ENCODE measurements at regions of chr2 and their contacts with region 1.

Region 1: DNA sequence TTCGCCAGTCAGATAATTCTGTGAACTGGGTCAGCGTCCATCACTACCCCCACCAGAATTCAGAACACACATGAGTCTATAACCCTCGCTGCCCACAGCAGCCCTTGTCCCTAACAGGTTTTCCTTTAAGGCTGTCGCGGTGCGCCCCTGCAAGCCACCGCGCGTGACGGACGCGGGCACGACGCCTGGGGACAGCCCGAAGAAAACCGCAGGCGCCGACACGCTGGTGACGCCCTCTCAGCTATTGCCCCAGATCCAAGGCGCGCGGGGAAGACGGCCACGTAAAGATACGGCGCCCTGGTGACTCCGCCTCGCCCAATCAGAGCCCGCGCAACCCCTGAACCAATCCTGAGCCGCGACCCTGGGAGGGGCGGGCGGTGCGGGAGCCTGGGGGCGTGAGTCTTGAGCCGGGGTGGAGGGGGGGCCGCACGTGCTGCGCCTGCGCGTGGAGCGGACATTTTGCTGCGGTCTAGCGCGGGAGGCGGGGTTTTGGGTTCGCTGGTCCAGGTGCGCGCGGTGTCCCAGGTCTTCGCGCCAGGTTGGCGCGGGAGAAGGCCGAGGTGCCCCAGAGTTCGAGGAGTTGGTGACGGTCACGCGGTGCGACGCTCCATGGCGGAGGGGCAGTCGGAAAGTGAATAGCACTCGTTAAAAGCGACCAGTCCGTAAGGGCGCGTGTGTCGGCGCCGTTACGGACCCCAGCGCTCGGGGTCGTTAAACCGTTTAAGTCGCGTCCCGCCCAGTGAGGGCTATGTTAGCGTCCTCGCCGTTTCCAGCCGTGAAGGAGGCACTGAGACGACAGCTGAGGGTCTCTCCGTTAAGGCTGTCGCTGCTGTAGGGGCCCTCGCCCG is 15.9 kb downstream of the NMUR1 start:
- DNase-seq: peak; percentile 97
- ATAC-seq: peak; percentile 98
- H3K4me3 Mint-ChIP-seq: peak overlapping the region; percentile 90
- H3K27ac Mint-ChIP-seq: peak overlapping the region; percentile 99
- H3K4me1 Mint-ChIP-seq: peaks cover 22% of the 10 kb centered on the region
- H3K27me3 Mint-ChIP-seq: peaks cover 11% of the 10 kb centered on the region
- CTCF ChIP-seq: no peak

Region 2: DNA sequence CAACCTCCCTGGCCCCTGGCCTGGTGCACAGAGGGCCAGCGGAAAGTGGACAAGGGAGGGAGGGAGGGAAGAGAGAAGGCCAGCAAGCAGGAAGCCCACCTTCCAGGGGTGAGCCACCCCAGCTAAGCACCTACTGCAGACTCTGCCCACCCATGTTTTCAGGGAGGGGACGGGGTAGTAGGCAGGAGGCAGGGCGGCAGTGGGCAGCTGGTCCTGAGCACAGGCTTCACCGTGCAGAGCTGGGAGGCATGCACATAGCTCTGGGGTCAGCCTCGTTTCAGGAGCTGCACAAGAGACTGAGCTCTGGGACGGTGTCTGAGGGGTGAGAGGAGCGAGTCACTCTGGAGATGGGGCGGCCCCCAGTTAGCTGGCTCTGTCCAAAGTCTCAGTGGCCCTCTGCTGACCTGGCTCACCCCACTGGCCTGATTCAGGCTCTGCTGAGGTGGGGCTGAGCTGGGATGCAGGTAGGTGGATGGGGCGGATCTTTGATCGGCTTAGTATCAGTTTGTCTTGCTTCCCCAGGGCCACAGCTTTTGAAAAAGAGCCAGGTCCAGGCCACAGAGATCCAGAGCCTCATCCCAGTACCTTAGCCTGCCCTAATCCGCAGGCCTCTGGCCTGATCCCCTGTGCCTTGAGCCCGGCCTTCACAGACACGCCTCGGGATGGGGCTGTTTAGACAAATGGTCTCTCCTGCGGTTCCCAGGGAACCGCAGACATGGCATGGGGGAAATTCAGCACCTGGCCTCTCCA is 12.2 kb after region 1 on chr2:
- CTCF ChIA-PET with region 1: interaction called, 14 read pairs
- POLR2A ChIA-PET with region 1: no interaction called
- DNase-seq: no peak
- ATAC-seq: peak; percentile 43
- H3K4me3 Mint-ChIP-seq: no peak overlapping the region
- H3K27ac Mint-ChIP-seq: no peak overlapping the region
- H3K4me1 Mint-ChIP-seq: peaks cover 14% of the 10 kb centered on the region
- H3K27me3 Mint-ChIP-seq: peaks cover 35% of the 10 kb centered on the region
- CTCF ChIP-seq: no peak